Prostate gland (tissue), 2 donors: ENCODE measurements at regions of chr1 and their contacts with region 1.

Region 1: GRCh38 chr1:173824331-173825081 is at the starts of genes CENPL and DARS2:
- DNase-seq: peak; percentile 96
- H3K4me3 ChIP-seq: peak within 1 kb of the TSS; percentile 55 to 62
- H3K27ac ChIP-seq: peak within 1 kb of the TSS; percentile 87 to 91
- H3K4me1 ChIP-seq: no peaks in the 10 kb centered on the region
- H3K27me3 ChIP-seq: no peaks in the 10 kb centered on the region
- CTCF ChIP-seq: no peak
- POLR2A ChIP-seq: peak; percentile 13
- total RNA-seq, gene CENPL: 5.7 to 9.4 TPM
- total RNA-seq, gene DARS2: 11.3 to 18.1 TPM

Region 2: DNA sequence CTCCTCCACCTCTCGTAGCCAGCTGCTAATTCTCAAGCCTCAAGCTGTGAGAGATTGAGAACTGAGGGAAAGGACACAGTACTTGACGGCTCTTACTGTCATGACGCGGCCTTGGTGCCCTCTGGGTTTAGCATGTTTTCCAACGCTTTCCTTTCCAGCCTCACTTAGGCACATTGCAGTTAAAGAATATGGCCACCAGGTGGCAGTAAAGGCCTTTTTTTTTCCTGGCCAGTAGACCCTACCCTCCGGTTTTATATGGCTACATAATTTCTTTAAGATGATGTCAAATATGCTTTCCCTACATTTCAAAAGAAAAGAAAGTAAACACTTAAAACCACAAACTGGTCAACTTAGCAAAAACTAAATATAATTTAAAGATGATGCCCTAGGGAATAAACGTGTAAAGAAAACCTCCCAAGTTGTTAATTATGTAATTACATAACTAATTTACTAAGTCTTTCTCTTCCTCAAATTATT is 404.1 kb before region 1 on chr1:
- intact Hi-C with region 1: loop called (anchors 2 kb)
- DNase-seq: peak; percentile 45
- H3K4me3 ChIP-seq: no peak overlapping the region
- H3K27ac ChIP-seq: no peak overlapping the region
- H3K4me1 ChIP-seq: no peaks in the 10 kb centered on the region
- H3K27me3 ChIP-seq: no peaks in the 10 kb centered on the region
- CTCF ChIP-seq: peak; percentile 80 to 93 (median 88)
- POLR2A ChIP-seq: no peak

Region 3: GRCh38 chr1:173476664-173477285 is 347.7 kb before region 1 on chr1:
- intact Hi-C with region 1: loop called (anchors 2 kb)
- DNase-seq: peak; percentile 96
- H3K4me3 ChIP-seq: peak overlapping the region; percentile 88 to 97
- H3K27ac ChIP-seq: peak overlapping the region; percentile 99
- H3K4me1 ChIP-seq: peaks cover 11% of the 10 kb centered on the region
- H3K27me3 ChIP-seq: no peaks in the 10 kb centered on the region
- CTCF ChIP-seq: peak in 2 of 4 experiments; percentile 13 to 24
- POLR2A ChIP-seq: peak; percentile 68

Region 4: DNA sequence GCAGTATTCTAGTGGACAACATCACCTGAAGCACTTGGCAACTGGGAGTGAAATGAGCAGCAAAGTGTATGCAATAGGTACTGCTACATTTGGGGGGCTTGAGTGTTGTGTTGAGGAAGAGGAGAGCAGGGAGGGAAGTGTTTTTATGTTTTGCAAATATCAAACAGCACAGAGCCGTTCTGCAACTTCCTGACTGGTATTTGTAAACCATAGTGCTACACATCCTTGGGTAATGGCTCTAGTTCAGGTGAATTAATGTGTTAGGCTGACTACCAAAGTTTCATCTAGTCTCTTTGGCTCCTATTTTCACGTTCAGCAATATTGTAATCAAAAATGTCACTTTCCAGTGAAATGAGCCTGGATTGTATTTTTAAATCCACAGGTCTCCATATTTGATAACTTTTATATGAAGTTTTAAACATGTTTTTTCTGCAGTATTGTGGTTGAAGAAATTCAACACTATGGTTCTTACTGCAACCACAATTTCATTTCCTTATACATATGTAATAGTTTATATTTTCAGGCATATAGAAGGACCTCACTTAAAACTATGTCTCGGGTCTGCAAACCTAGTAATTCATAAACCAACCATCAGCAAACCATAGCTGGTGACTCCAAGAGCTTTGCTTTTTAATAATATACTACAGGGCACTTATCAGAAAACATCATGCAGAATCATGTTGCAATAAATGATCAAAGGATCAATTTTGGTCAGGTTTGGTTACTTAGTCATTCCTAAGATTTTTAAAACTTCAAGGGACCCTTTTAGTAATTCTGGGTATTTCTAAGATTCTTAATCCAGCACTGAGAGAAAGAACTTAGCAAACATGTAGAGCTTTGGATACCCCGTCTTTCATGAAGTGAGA is 62.5 kb after region 1 on chr1:
- intact Hi-C with region 1: no loop called
- DNase-seq: no peak
- H3K4me3 ChIP-seq: no peak overlapping the region
- H3K27ac ChIP-seq: no peak overlapping the region
- H3K4me1 ChIP-seq: no peaks in the 10 kb centered on the region
- H3K27me3 ChIP-seq: no peaks in the 10 kb centered on the region
- CTCF ChIP-seq: no peak
- POLR2A ChIP-seq: no peak

Region 5: GRCh38 chr1:174105086-174105485 is 280.6 kb after region 1 on chr1:
- intact Hi-C with region 1: no loop called
- DNase-seq: no peak
- H3K4me3 ChIP-seq: no peak overlapping the region
- H3K27ac ChIP-seq: no peak overlapping the region
- H3K4me1 ChIP-seq: no peaks in the 10 kb centered on the region
- H3K27me3 ChIP-seq: no peaks in the 10 kb centered on the region
- CTCF ChIP-seq: no peak
- POLR2A ChIP-seq: no peak